PC-9 (cell line): ENCODE measurements at regions of chr20 and their contacts with region 1.

Region 1: DNA sequence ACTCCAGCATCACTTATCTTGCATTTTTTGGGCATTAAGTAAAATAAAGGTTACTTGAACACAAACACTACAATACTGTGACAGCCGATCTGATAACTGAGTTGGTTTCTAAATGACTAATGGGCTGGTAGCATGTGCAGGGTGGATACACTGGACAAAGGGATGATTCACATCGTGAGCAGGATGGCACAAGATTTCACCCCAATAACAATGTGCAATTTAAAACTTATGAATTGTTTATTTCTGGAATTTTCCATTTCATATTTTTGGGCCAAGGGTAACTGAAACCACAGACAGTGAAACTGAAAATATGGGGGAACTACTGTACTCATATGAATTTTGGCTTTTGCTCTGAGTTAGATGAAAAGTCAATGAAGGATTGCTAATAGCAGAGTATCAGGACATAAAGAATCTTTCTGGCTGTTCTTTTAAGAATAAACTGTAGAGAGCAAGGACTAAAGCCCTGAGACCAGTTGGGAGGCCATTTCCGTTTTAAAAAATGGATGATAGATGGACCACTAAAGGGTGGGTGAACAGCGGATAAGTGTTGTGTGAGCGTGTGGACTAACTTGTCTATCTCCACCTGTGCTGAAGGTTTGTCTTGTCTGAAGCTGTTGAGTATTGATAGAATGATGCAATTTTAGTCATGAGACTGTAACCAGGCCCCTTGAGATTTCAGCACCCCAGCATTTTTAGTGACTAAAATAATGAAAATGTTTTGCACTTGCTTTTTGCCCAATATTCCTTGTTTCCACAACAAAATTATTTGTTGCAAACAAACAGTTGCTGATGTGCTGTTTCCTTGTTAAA is 8.2 kb downstream of the SPINT3 start:
- DNase-seq: peak in 1 of 2 experiments; percentile 86
- H3K4me3 ChIP-seq: peak overlapping the region; percentile 7; the same call in 1 of the 2 replicates
- H3K27ac ChIP-seq: peak overlapping the region; percentile 95
- H3K4me1 ChIP-seq: peaks cover 45% of the 10 kb centered on the region
- H3K27me3 ChIP-seq: no peaks in the 10 kb centered on the region
- CTCF ChIP-seq: no peak

Region 2: GRCh38 chr20:45487231-45487635 is 20.0 kb before region 1 on chr20:
- CTCF ChIA-PET with region 1: no interaction called
- POLR2A ChIA-PET with region 1: no interaction called
- intact Hi-C with region 1: loop called (anchors 1 kb)
- DNase-seq: no peak
- H3K4me3 ChIP-seq: no peak overlapping the region
- H3K27ac ChIP-seq: no peak overlapping the region
- H3K4me1 ChIP-seq: peaks cover 17% of the 10 kb centered on the region
- H3K27me3 ChIP-seq: no peaks in the 10 kb centered on the region
- CTCF ChIP-seq: peak; percentile 21; the same call in 1 of the 2 replicates

Region 3: GRCh38 chr20:45518282-45518681 is 11.1 kb after region 1 on chr20:
- CTCF ChIA-PET with region 1: no interaction called
- POLR2A ChIA-PET with region 1: no interaction called
- intact Hi-C with region 1: loop called (anchors 1 kb)
- DNase-seq: peak; percentile 85 to 96
- H3K4me3 ChIP-seq: peak overlapping the region; percentile 4; the same call in 1 of the 2 replicates
- H3K27ac ChIP-seq: peak overlapping the region; percentile 83
- H3K4me1 ChIP-seq: peaks cover 24% of the 10 kb centered on the region
- H3K27me3 ChIP-seq: no peaks in the 10 kb centered on the region
- CTCF ChIP-seq: no peak

Region 4: GRCh38 chr20:45527294-45527693 is 20.1 kb after region 1 on chr20:
- CTCF ChIA-PET with region 1: no interaction called
- POLR2A ChIA-PET with region 1: interaction called, 13 read pairs
- intact Hi-C with region 1: no loop called
- DNase-seq: no peak
- H3K4me3 ChIP-seq: no peak overlapping the region
- H3K27ac ChIP-seq: no peak overlapping the region
- H3K4me1 ChIP-seq: peaks cover 18% of the 10 kb centered on the region
- H3K27me3 ChIP-seq: no peaks in the 10 kb centered on the region
- CTCF ChIP-seq: no peak

Region 5: GRCh38 chr20:46939031-46939965 is 1432.1 kb after region 1 on chr20:
- CTCF ChIA-PET with region 1: no interaction called
- POLR2A ChIA-PET with region 1: no interaction called
- intact Hi-C with region 1: no loop called
- DNase-seq: peak in 1 of 2 experiments; percentile 44
- H3K4me3 ChIP-seq: no peak overlapping the region
- H3K27ac ChIP-seq: no peak overlapping the region
- H3K4me1 ChIP-seq: 0 out of 2 replicates have a peak, but pooled peaks cover 3% of the 10 kb centered on the region
- H3K27me3 ChIP-seq: no peaks in the 10 kb centered on the region
- CTCF ChIP-seq: peak; percentile 44; the same call in 1 of the 2 replicates